Heart right ventricle (tissue), 16 donors: ENCODE measurements at regions of chr15 and their contacts with region 1.

Region 1: DNA sequence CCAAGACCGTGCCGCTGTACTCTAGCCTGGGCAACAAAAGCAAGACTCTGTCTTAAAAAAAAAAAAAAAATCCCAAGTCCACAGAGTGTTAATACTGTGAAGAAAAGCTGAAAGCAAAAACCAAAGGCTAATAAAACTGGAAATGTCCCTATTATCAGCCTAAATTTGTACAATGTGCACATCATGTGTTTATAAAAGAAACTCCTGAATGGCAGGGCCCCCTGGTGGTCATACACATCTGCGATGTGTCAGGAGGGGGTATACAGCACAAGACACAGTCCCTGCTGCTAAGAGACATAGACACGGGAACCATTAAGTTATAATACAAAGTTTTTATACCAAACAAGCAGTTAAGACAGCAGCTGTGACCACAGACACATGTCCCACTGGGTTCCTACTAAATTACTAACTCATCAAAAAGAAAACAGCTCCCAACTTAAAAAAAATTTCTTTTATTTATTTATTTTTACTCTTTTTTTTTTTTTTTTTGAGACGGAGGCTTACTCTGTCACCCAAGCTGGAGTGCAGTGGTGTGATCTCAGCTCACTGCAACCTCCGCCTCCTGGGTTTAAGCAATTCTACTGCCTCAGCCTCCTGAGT is 31.0 kb downstream of the IDH2 start:
- DNase-seq: peak; percentile 75 to 90
- ATAC-seq: peak in 7 of 8 donors; percentile 59 to 86 (median 83)
- H3K4me3 ChIP-seq: no peak overlapping the region
- H3K27ac ChIP-seq: peak overlapping the region in 3 of 10 donors; percentile 30 to 62 (median 32)
- H3K4me1 ChIP-seq: peaks cover 0 to 29% (median 8%) of the 10 kb centered on the region in 9 donors
- H3K27me3 ChIP-seq: no peaks in the 10 kb centered on the region
- CTCF ChIP-seq: peak; percentile 74 to 93 (median 85)

Region 2: DNA sequence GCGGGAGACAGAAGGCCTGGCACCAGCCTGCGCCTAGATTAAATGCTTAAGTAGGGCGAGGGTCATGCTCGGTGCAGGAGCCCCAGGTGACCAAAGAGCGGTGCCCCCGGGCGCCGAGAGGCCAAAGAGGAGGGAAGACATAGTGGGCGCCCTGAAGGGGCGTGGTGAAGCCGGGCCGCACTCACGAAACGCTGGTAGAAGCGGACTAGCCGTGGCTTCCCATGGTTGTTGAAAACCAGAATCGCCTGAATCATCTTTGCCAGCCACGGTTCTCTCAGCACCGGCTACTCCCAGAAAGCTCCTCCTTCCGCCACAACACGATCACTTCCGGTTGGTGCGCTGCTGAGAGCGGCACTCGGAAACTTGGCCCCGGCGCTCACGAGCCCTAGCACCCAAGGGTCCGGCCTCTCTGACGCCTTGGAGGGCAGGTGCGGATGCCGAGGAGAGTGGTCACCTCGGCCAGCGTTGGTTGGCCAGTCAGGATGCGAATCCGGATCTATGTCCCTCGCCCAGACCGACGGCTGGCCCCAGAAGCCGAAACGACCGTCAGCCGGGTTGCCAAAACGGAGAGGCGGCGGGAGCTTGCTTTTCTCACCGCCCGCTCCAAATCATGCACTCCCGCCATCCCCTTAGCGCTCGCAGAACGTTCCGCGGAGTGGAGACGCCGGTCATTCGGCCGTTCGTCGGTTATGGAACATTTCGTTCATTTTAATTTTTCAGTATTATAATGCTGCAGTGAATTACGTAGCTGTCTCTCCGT is 177.4 kb before region 1 on chr15 and contains the start of gene AP3S2:
- intact Hi-C with region 1: loop called in 5 of 10 experiments (anchors 2 to 5 kb)
- DNase-seq: peak; percentile 88 to 92
- ATAC-seq: peak; percentile 98 to 99 (median 99)
- H3K4me3 ChIP-seq: peak within 1 kb of the TSS; percentile 57 to 95 (median 82)
- H3K27ac ChIP-seq: peak within 1 kb of the TSS; percentile 57 to 96 (median 90)
- H3K4me1 ChIP-seq: peaks cover 0 to 42% (median 19%) of the 10 kb centered on the region in 9 donors
- H3K27me3 ChIP-seq: no peaks in the 10 kb centered on the region
- CTCF ChIP-seq: peak in 1 of 9 donors; percentile 16
- total RNA-seq, gene AP3S2: 37.0 to 55.5 (median 46.1) TPM

Region 3: GRCh38 chr15:89904519-89904918 is 166.8 kb before region 1 on chr15:
- intact Hi-C with region 1: loop called in 8 of 10 experiments (anchors 5 to 10 kb)
- DNase-seq: no peak
- ATAC-seq: no peak
- H3K4me3 ChIP-seq: no peak overlapping the region
- H3K27ac ChIP-seq: no peak overlapping the region
- H3K4me1 ChIP-seq: peaks cover 0 to 15% (median 4%) of the 10 kb centered on the region in 9 donors
- H3K27me3 ChIP-seq: no peaks in the 10 kb centered on the region
- CTCF ChIP-seq: no peak

Region 4: GRCh38 chr15:89912674-89913396 is 158.5 kb before region 1 on chr15 and contains the start of gene ARPIN:
- intact Hi-C with region 1: loop called in 5 of 10 experiments (anchors 5 to 10 kb)
- DNase-seq: peak; percentile 56 to 72
- ATAC-seq: peak; percentile 81 to 93 (median 90)
- H3K4me3 ChIP-seq: peak within 1 kb of the TSS; percentile 53 to 95 (median 81)
- H3K27ac ChIP-seq: peak within 1 kb of the TSS in 9 of 10 donors; percentile 76 to 89 (median 81)
- H3K4me1 ChIP-seq: peaks cover 5 to 24% (median 16%) of the 10 kb centered on the region in 9 donors
- H3K27me3 ChIP-seq: peaks cover 0 to 9% (median 0%) of the 10 kb centered on the region in 7 donors
- CTCF ChIP-seq: peak in 2 of 9 donors; percentile 6 to 10
- total RNA-seq, gene ARPIN: 7.7 to 12.8 (median 11.3) TPM

Region 5: GRCh38 chr15:90151989-90152645 is 80.8 kb after region 1 on chr15:
- intact Hi-C with region 1: no loop called
- DNase-seq: no peak
- ATAC-seq: peak in 6 of 8 donors; percentile 31 to 80 (median 59)
- H3K4me3 ChIP-seq: no peak overlapping the region
- H3K27ac ChIP-seq: no peak overlapping the region
- H3K4me1 ChIP-seq: peaks cover 0 to 17% (median 0%) of the 10 kb centered on the region in 9 donors
- H3K27me3 ChIP-seq: no peaks in the 10 kb centered on the region
- CTCF ChIP-seq: no peak